Left lung (tissue), 14 donors: ENCODE measurements at regions of chr7 and their contacts with region 1.

Region 1: GRCh38 chr7:94095316-94096009 is 91.3 kb upstream of the BET1 start:
- DNase-seq: no peak
- ATAC-seq: no peak
- H3K4me3 ChIP-seq: no peak overlapping the region
- H3K27ac ChIP-seq: no peak overlapping the region
- H3K4me1 ChIP-seq: no peaks in the 10 kb centered on the region
- H3K27me3 ChIP-seq: no peaks in the 10 kb centered on the region
- CTCF ChIP-seq: no peak

Region 2: GRCh38 chr7:93902777-93903423 is 192.6 kb before region 1 on chr7:
- intact Hi-C with region 1: loop called in 1 of 2 experiments (anchors 10 kb)
- DNase-seq: peak in 1 of 4 donors; percentile 68
- ATAC-seq: peak; percentile 74
- H3K4me3 ChIP-seq: no peak overlapping the region
- H3K27ac ChIP-seq: no peak overlapping the region
- H3K4me1 ChIP-seq: no peaks in the 10 kb centered on the region
- H3K27me3 ChIP-seq: no peaks in the 10 kb centered on the region
- CTCF ChIP-seq: peak; percentile 54 to 81

Region 3: DNA sequence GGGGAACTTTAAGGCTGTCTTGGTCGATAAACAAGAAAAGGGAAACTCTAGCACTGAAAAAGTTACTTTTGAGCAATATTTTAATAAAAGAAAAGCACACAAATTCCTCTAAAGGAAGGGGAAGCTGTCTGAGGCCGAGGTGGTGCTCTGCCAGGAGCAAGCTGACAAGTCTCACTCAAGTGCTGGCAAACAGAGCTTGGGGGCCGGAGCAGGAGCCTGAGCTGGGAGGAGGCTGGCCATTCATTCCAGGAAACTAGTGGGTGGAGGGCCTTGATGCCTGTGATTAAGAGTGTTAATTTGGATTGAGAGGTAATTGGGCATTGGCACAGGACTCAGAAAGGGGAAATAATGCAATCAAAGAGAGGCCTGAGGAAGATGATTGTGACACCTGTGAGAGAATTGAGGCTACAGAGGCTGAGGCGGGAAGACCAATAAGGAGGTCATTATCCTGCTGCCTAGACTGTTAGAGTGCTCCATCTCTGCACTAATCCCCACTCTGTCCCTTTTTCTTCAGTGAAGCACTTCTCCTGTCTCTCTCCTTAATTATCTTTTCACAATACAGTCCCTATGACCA is 144.3 kb after region 1 on chr7:
- intact Hi-C with region 1: no loop called
- DNase-seq: peak in 2 of 4 donors; percentile 64 to 78
- ATAC-seq: peak; percentile 95
- H3K4me3 ChIP-seq: no peak overlapping the region
- H3K27ac ChIP-seq: no peak overlapping the region
- H3K4me1 ChIP-seq: no peaks in the 10 kb centered on the region
- H3K27me3 ChIP-seq: no peaks in the 10 kb centered on the region
- CTCF ChIP-seq: no peak